ENCODE measurements at regions of chr17 and their contacts with region 1.

Region 1: DNA sequence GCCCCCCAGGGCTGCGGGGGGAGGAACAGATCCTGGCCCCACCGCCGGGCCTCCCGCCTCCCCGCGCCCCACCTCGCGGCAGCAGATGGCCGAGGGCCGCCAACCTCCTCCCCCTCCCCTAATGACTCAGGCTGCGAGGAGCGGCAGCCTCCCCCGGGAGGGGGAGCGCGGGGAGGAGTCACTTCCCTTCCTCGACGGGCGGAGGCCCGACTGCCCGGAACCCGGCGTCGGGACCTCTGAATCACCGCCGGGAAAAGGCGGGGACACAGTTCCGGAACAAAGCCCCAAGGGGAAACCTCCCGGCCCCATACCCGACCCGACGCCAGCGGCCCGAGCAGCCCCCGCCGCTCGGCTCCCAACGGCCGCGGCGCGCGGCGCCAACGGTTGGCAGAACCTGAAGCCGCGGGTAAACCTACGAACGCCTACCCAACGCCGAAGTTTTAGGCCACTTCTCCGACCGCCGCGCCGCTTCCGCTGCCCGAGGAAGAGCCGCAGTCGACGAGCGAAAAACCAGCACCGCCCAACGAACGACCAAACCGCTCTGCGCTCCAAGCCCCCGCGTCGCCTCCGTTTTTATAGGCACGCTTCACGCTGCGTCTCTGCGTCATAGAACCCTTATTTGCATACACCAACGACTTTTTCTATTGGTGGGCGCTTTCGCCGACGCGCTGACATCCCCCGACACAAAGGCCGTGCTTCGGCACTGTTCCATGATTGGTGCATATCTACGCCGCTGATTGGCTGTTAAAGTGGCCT is 5.2 kb upstream of the UNK start:
- DNase-seq: peak; percentile 96
- H3K4me3 Mint-ChIP-seq: peak overlapping the region; percentile 88
- H3K27ac Mint-ChIP-seq: peak overlapping the region; percentile 96
- H3K4me1 Mint-ChIP-seq: peaks cover 58% of the 10 kb centered on the region
- H3K27me3 Mint-ChIP-seq: no peaks in the 10 kb centered on the region

Region 2: GRCh38 chr17:75764711-75765421 is 14.5 kb before region 1 on chr17 and contains the start of gene GALK1:
- CTCF ChIA-PET with region 1: interaction called, 21 read pairs
- POLR2A ChIA-PET with region 1: interaction called, 214 read pairs
- DNase-seq: peak; percentile 82
- H3K4me3 Mint-ChIP-seq: peak within 1 kb of the TSS; percentile 77
- H3K27ac Mint-ChIP-seq: peak within 1 kb of the TSS; percentile 49
- H3K4me1 Mint-ChIP-seq: peaks cover 19% of the 10 kb centered on the region
- H3K27me3 Mint-ChIP-seq: peaks cover 4% of the 10 kb centered on the region
- total RNA-seq, gene GALK1: 40.0 to 40.6 TPM

Region 3: DNA sequence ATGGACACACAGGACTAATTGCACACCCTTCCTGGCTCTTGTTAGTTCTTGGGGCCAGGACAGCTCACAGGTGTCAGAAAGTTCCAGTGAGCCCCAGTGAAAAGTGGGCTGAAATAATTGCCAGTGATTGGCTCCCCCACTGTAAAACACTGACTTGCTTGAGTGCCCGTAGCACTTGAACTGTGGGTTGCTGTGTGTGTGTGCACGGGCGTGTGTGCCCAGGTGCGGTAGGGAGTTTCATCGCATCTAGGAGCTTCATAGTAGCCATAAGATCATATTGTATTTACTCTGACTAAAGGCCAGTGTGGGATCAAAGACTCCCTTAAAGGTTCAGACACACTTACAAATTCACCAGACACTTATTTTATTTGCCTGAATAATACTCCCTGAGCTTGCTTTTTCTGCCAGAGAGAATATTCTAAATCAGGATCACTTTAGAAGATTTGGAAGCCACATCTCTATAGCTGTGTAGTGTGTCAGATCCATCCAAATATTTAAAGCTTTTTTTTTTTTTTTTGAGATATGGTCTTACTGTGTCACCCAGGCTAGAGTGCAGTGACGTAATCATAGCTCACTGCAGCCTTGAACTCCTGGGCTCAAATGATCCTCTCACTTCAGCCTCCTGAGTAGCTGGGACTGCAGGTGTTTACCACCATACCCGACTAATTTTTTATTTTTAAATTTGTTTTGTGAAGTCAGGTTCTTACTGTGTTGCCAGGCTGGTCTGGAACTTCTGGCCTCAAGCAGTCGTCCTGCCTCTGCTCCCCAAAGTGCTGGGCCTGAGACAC is 16.6 kb after region 1 on chr17:
- CTCF ChIA-PET with region 1: interaction called, 3 read pairs
- POLR2A ChIA-PET with region 1: interaction called, 43 read pairs
- DNase-seq: no peak
- H3K4me3 Mint-ChIP-seq: no peak overlapping the region
- H3K27ac Mint-ChIP-seq: no peak overlapping the region
- H3K4me1 Mint-ChIP-seq: peaks cover 28% of the 10 kb centered on the region
- H3K27me3 Mint-ChIP-seq: no peaks in the 10 kb centered on the region

Region 4: GRCh38 chr17:75827252-75828115 is 48.1 kb after region 1 on chr17:
- CTCF ChIA-PET with region 1: interaction called, 14 read pairs
- POLR2A ChIA-PET with region 1: interaction called, 190 read pairs
- DNase-seq: peak; percentile 70
- H3K4me3 Mint-ChIP-seq: peak overlapping the region; percentile 35
- H3K27ac Mint-ChIP-seq: peak overlapping the region; percentile 93
- H3K4me1 Mint-ChIP-seq: peaks cover 26% of the 10 kb centered on the region
- H3K27me3 Mint-ChIP-seq: no peaks in the 10 kb centered on the region

Region 5: DNA sequence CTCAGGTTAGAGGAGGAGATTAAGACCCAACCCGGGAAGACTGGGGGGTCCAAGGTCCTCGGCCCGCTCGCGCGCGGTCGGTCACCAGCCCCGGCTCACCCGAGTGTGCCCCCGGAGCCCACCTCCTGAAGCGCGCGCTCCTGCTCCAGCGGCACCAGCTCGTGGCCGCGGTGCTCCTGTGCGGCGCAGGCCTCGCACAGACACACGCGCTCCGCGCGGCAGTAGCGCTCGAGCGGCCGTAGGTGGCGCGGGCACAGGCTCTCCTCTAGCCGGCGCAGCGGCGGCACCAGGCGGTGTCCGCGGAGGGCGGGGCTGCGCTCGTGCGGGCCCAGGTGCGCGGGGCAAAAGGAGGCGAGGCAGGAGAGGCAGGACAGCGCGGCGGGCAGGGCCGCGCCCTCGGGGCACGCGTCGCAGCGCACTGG is 98.4 kb after region 1 on chr17:
- CTCF ChIA-PET with region 1: interaction called, 8 read pairs
- POLR2A ChIA-PET with region 1: interaction called, 27 read pairs
- DNase-seq: peak; percentile 82
- H3K4me3 Mint-ChIP-seq: peak overlapping the region; percentile 89
- H3K27ac Mint-ChIP-seq: peak overlapping the region; percentile 93
- H3K4me1 Mint-ChIP-seq: peaks cover 63% of the 10 kb centered on the region
- H3K27me3 Mint-ChIP-seq: peaks cover 14% of the 10 kb centered on the region

Region 6: GRCh38 chr17:75896415-75897159 is 117.2 kb after region 1 on chr17 and contains the start of gene TRIM65:
- CTCF ChIA-PET with region 1: interaction called, 8 read pairs
- POLR2A ChIA-PET with region 1: interaction called, 28 read pairs
- DNase-seq: peak; percentile 83
- H3K4me3 Mint-ChIP-seq: peak within 1 kb of the TSS; percentile 81
- H3K27ac Mint-ChIP-seq: peak within 1 kb of the TSS; percentile 74
- H3K4me1 Mint-ChIP-seq: peaks cover 24% of the 10 kb centered on the region
- H3K27me3 Mint-ChIP-seq: no peaks in the 10 kb centered on the region
- total RNA-seq, gene TRIM65: 24.9 to 26.1 TPM

Measured in activated CD4-positive, alpha-beta memory T cell treated with anti-CD3 and anti-CD28 coated beads, Interleukin-2, amount 10 ng/mL, durations not matched to agents 7 days and 5 days (primary cell).